A549 (cell line): ENCODE measurements at regions of chr1 and their contacts with region 1.

Region 1: GRCh38 chr1:222750651-222751050 is 13.6 kb downstream of the FAM177B start:
- DNase-seq: no peak
- ATAC-seq: no peak
- H3K4me3 ChIP-seq: no peak overlapping the region
- H3K27ac ChIP-seq: no peak overlapping the region
- H3K4me1 ChIP-seq: peaks cover 6% of the 10 kb centered on the region; the same call in 1 of the 3 replicates
- CTCF ChIP-seq: no peak
- EP300 ChIP-seq: no peak
- POLR2A ChIP-seq: no peak
- RAD21 ChIP-seq: no peak

Region 2: GRCh38 chr1:222634180-222635013 is 116.3 kb before region 1 on chr1:
- CTCF ChIA-PET with region 1: no interaction called
- POLR2A ChIA-PET with region 1: no interaction called
- DNase-seq: peak; percentile 71 to 89
- ATAC-seq: peak; percentile 87 to 95
- H3K4me3 ChIP-seq: no peak overlapping the region
- H3K27ac ChIP-seq: no peak overlapping the region
- H3K4me1 ChIP-seq: no peaks in the 10 kb centered on the region
- CTCF ChIP-seq: peak; percentile 93
- EP300 ChIP-seq: no peak
- POLR2A ChIP-seq: no peak
- RAD21 ChIP-seq: peak; percentile 81

Region 3: DNA sequence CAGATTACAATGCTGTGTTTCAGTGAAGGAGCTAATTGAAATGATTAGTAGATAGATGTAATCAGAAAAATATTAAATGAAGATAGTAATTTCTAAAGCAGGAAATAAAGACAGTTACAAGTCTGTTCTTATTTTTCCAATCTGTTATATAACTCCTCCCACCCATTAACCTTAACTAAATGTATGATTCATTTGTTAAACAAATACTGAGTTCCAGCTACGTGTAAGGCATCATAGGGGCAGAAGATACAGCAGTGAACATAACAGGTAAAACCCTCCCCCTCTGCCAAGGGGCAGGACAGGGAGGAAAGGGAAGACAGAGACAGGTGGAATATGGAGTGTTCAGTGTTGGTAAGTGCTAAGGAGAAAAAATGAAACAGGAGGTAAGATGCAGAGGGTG is 13.7 kb before region 1 on chr1 and contains the start of gene FAM177B:
- CTCF ChIA-PET with region 1: interaction called, 10 read pairs
- POLR2A ChIA-PET with region 1: no interaction called
- DNase-seq: no peak
- ATAC-seq: peak in 1 of 2 experiments; percentile 25; a peak in 1 of 6 replicates
- H3K4me3 ChIP-seq: no peak within 1 kb of the TSS
- H3K27ac ChIP-seq: no peak within 1 kb of the TSS
- H3K4me1 ChIP-seq: peaks cover 9% of the 10 kb centered on the region; the same call in 2 of the 3 replicates
- CTCF ChIP-seq: no peak
- EP300 ChIP-seq: no peak
- POLR2A ChIP-seq: no peak
- RAD21 ChIP-seq: no peak
- polyA plus RNA-seq, gene FAM177B: not detected in 2 replicates